ENCODE measurements at regions of chr7 and their contacts with region 1.

Region 1: DNA sequence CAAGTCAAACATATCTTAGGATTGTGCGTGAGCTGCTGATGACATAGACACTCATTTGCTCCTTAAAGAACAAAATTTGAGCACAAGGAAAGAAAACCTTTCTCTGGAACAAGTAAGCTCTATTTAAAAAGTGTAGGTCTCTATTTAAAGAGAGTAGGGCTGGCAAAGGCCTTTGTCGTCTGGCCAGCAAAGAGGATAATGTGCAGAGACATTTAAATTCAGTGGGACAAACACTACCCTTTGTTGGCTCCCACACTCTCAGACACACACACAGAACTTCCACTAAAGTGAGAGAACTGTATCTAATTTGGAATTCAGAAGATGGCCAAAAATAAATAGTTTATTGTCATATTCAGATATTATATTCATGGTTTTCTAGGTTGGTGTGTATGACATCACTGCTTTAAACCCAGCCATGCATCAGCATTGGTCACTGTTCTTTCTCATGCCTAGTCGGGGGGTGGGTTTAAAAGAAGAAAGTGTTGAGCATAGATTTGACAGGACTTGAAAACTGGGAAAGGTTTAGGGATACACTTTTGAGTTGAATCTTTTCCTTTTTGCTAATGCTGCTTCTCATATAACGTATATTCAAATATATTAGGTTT is 49.5 kb upstream of the HDAC9 start:
- DNase-seq: no peak
- ATAC-seq: peak in 2 of 8 donors; percentile 46 to 57
- H3K4me3 ChIP-seq: no peak overlapping the region
- H3K27ac ChIP-seq: peak overlapping the region in 2 of 10 donors; percentile 11 to 21
- H3K4me1 ChIP-seq: peaks cover 0 to 14% (median 0%) of the 10 kb centered on the region in 9 donors
- H3K27me3 ChIP-seq: no peaks in the 10 kb centered on the region
- CTCF ChIP-seq: no peak

Region 2: DNA sequence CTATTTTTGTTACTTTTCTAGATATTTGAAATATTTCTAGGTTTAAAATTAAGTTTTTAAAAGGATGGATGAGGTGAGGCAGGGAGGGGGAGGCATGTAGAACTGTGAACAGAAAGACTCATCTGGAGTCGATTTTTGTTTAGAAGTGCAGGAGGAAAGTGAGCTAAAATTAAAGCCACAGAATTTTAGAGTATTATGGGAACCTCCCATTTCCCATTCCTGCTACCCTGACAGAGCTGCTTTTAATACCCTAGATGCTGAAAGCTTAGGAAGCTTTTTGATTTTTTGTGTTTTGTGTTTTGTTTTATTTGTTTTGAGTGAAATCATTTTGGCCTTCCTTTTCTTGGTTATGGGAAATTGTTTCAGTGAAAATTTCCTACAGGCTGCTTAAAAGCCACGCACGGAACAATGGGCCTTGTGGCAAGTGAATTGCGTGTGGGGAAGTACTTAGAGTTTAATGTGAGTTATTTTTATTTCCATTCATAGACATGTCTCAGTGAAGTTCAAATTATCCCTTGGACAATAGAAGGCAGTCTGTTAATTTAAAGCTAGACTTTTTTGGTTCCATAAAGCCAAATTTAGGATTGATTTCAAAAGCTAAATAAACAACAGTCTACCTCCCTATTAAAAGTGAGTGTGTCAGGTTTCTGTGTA is 52.4 kb before region 1 on chr7:
- intact Hi-C with region 1: loop called in 1 of 10 experiments (anchors 10 kb)
- DNase-seq: no peak
- ATAC-seq: peak in 3 of 8 donors; percentile 38 to 64 (median 49)
- H3K4me3 ChIP-seq: no peak overlapping the region
- H3K27ac ChIP-seq: peak overlapping the region in 5 of 10 donors; percentile 20 to 45 (median 32)
- H3K4me1 ChIP-seq: peaks cover 0 to 44% (median 39%) of the 10 kb centered on the region in 9 donors
- H3K27me3 ChIP-seq: no peaks in the 10 kb centered on the region
- CTCF ChIP-seq: no peak